ENCODE measurements at regions of chr17 and their contacts with region 1.

Region 1: DNA sequence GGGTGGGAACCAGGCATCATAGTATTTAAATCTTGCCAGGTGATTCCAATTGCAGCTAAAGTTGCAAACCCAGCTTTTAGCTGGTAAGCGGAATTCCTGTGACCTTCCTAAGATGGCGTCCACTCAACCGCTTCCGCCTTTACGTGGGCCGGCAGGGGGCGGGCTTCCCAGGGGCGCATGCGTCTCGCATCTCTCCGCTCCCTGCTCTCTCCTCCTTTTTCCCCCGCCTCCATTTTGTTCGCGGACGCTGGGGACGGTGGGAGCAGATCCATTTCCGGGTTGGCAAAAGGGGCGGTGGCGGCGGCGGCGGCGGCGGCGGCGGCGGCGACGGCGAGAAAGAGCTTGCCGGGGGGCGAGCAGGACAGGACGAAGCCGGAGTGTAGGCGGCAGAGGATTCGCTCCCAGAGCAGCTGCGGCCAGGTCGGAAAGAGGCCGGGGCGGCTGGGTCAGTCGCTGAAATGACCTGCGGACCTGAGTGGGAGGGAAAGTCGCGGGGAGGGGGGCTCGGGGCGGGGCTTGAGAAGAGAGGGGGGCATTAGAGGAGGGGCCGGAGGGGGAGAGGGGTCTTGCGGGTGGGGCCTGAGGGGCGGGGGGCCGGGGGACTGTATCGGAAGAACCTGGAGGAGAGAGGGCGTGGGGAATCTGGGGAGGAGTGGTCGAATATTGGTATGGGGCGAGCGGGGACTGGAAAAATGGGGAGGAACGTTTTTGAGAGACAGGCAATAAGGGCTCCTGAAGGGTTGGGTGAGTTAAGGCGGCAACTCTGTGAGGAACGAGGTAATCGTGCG is at the start of gene WIPF2:
- DNase-seq: peak; percentile 99
- ATAC-seq: peak; percentile 90
- H3K4me3 Mint-ChIP-seq: peak within 1 kb of the TSS; percentile 90
- H3K27ac Mint-ChIP-seq: peak within 1 kb of the TSS; percentile 100
- H3K4me1 Mint-ChIP-seq: peaks cover 18% of the 10 kb centered on the region
- H3K27me3 Mint-ChIP-seq: no peaks in the 10 kb centered on the region; the same call in 1 of the 2 replicates
- CTCF ChIP-seq: peak; percentile 81
- total RNA-seq, gene WIPF2: 23.0 to 24.6 TPM (median 23.8 TPM) in 3 replicates

Region 2: GRCh38 chr17:40168262-40168832 is 50.9 kb before region 1 on chr17:
- CTCF ChIA-PET with region 1: interaction called, 14 read pairs
- POLR2A ChIA-PET with region 1: no interaction called
- DNase-seq: no peak
- ATAC-seq: peak; percentile 84
- H3K4me3 Mint-ChIP-seq: no peak overlapping the region
- H3K27ac Mint-ChIP-seq: peak overlapping the region; percentile 98
- H3K4me1 Mint-ChIP-seq: peaks cover 5% of the 10 kb centered on the region
- H3K27me3 Mint-ChIP-seq: no peaks in the 10 kb centered on the region; the same call in 1 of the 2 replicates
- CTCF ChIP-seq: no peak; the same call in 1 of the 2 replicates

Region 3: GRCh38 chr17:40203131-40203530 is 16.1 kb before region 1 on chr17:
- CTCF ChIA-PET with region 1: interaction called, 39 read pairs
- POLR2A ChIA-PET with region 1: no interaction called
- DNase-seq: no peak
- ATAC-seq: no peak
- H3K4me3 Mint-ChIP-seq: no peak overlapping the region
- H3K27ac Mint-ChIP-seq: no peak overlapping the region
- H3K4me1 Mint-ChIP-seq: no peaks in the 10 kb centered on the region
- H3K27me3 Mint-ChIP-seq: peaks cover 5% of the 10 kb centered on the region
- CTCF ChIP-seq: no peak

Region 4: GRCh38 chr17:40281663-40282062 is 62.4 kb after region 1 on chr17:
- CTCF ChIA-PET with region 1: interaction called, 31 read pairs
- POLR2A ChIA-PET with region 1: interaction called, 4 read pairs
- DNase-seq: peak; percentile 30
- ATAC-seq: peak; percentile 88
- H3K4me3 Mint-ChIP-seq: no peak overlapping the region
- H3K27ac Mint-ChIP-seq: peak overlapping the region; percentile 89
- H3K4me1 Mint-ChIP-seq: peaks cover 21% of the 10 kb centered on the region
- H3K27me3 Mint-ChIP-seq: no peaks in the 10 kb centered on the region
- CTCF ChIP-seq: no peak

Region 5: DNA sequence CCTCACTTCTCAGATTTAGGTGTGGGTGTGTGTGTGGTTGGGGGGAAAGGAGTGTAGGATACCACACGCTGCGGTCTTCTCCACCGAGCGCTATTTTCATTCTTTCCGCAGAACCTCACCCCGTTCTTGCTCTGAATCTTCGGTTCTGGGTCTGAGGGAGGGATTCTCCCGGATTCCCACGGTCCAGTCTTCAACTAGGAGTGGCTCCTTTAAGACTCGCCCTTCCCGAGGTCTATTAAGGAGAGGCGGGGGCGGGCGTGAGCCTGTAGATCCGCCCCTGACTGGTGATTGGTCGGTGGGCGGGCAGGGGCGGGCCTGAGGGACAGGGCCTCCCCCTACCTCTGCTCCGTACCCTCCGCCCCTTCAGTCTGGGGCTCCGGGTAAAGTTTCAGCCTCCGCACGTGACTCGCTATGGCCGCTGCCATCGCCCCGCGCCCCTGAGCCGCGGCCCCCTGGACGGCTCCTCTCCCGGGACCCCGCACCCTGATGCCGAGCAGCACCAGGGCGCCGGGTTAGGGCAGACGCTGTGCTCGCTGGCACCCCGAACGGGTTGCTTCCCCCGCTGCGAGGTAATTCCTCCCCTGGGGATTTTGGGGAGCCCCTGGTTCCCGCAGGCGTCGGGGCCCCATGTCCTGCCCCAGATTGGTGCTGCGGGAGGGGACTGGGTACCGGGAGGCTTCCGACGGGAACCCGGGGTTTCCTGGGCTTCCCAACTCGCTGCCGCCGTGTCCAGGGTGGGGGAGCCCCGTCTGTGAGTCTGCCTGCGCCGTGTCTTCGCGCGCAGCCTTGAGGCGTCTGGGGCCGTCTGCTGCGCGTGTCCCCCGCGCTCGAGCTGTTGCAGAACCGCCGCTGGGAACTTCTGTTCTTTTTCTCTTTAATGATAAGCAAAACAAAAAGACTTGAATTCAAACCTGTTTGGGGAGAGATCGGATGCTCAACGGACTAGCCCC is 98.9 kb after region 1 on chr17:
- CTCF ChIA-PET with region 1: interaction called, 16 read pairs
- POLR2A ChIA-PET with region 1: no interaction called
- DNase-seq: peak; percentile 96
- ATAC-seq: peak; percentile 93
- H3K4me3 Mint-ChIP-seq: peak overlapping the region; percentile 90
- H3K27ac Mint-ChIP-seq: peak overlapping the region; percentile 97
- H3K4me1 Mint-ChIP-seq: peaks cover 74% of the 10 kb centered on the region
- H3K27me3 Mint-ChIP-seq: peaks cover 22% of the 10 kb centered on the region
- CTCF ChIP-seq: no peak

Region 6: DNA sequence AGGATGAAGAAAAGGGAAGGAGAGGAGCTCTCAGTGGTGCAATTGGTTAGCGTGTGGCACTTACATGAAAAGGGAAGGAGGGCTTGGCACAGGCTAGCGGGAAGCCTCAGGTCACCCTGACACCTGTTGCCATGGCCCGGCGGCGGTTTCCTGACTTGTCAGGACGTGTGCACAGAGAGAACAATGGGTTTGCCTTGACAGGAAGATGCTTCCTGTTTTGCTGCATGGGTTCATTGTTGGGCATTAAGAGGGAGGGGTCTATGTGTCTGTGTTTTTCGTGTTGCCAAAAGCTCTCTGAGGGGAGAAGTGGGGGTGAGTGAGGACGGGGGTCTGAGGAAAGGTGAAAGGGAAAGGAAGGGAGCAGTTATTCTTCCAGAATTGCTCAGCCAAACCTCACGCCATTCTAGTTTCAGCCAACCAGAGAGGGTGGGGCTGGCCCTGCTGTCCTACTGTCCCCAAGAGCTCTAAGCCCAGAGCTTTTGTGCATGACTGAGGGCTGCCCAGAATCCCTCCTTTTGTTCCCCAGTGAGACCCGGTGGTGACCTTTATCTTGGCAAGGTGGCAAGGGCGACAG is 363.1 kb after region 1 on chr17:
- CTCF ChIA-PET with region 1: no interaction called
- POLR2A ChIA-PET with region 1: no interaction called
- DNase-seq: no peak
- ATAC-seq: no peak; the same call in 1 of the 2 replicates
- H3K4me3 Mint-ChIP-seq: no peak overlapping the region
- H3K27ac Mint-ChIP-seq: no peak overlapping the region
- H3K4me1 Mint-ChIP-seq: peaks cover 7% of the 10 kb centered on the region
- H3K27me3 Mint-ChIP-seq: peaks cover 15% of the 10 kb centered on the region
- CTCF ChIP-seq: no peak

Measured in WTC11 (cell line).